Activated CD4-positive, alpha-beta memory T cell treated with anti-CD3 and anti-CD28 coated beads for 36 hours (primary cell): ENCODE measurements at regions of chr15 and their contacts with region 1.

Region 1: DNA sequence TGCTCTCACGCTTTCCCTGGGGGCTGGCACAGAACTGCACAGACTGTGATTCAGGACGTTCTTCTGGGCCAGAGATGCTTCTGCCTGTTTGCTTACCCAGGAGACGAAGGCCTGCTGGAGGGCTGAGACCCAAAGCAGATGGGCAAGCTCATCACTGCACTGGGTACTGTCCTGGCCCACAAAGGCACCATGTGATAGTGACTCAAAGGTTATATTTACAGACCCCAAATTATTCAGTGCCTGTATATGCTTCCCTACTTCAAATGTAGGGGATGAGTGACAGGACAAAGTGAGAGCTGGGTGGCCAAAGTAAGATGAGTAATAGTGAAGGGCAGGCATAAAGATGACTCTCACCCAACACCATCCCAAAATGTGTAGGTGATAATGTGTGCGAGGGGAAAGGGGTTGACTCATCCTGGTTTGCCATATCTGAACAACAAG is 127.4 kb downstream of the WDR76 start:
- DNase-seq: peak; percentile 38
- H3K4me3 Mint-ChIP-seq: no peak overlapping the region
- H3K27ac Mint-ChIP-seq: no peak overlapping the region
- H3K4me1 Mint-ChIP-seq: peaks cover 9% of the 10 kb centered on the region
- H3K27me3 Mint-ChIP-seq: peaks cover 10% of the 10 kb centered on the region

Region 2: DNA sequence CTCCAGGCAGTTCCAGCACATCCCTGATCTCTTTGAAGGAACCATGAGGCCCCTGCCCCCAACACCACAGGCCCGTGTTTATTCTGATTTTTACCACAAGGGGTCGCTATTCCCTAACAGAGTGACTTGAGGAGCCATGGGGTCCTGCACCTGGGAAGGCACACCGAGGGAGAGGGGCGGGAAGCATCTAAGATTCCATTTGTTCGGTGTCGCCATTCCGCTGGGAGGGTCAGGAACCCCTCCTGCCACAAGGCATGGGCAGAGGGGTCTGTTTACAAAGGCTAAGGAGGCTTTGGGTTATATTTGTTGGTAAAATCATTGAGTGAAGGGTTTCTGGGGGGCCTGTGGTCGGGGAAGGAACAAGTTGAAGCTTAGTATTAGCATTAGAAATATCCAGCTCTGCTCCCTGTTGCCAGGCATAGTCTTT is 50.3 kb before region 1 on chr15:
- CTCF ChIA-PET with region 1: no interaction called
- POLR2A ChIA-PET with region 1: no interaction called
- intact Hi-C with region 1: no loop called
- DNase-seq: peak; percentile 59
- H3K4me3 Mint-ChIP-seq: no peak overlapping the region
- H3K27ac Mint-ChIP-seq: no peak overlapping the region
- H3K4me1 Mint-ChIP-seq: peaks cover 2% of the 10 kb centered on the region
- H3K27me3 Mint-ChIP-seq: no peaks in the 10 kb centered on the region

Region 3: DNA sequence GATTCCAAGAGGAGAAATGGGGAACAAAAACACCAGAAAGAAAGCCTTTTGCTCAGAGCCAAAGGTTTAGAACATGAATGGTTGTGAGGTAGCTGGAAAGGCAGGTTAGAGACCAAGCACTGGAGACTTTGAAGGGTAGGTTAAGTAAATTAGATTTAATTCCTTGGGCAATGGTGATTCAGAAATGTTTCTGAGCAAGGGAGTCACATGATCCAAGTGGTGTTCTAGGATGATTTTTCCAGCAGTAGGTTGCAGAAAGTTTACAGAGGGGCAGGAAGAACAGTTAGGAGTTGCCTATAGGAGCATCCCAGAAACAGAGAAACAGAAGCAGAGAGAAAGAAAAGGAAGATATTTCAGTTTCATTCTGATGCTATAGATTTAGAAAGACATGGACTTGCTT is 12.4 kb after region 1 on chr15:
- CTCF ChIA-PET with region 1: no interaction called
- POLR2A ChIA-PET with region 1: no interaction called
- intact Hi-C with region 1: no loop called
- DNase-seq: no peak
- H3K4me3 Mint-ChIP-seq: no peak overlapping the region
- H3K27ac Mint-ChIP-seq: no peak overlapping the region
- H3K4me1 Mint-ChIP-seq: no peaks in the 10 kb centered on the region
- H3K27me3 Mint-ChIP-seq: no peaks in the 10 kb centered on the region

Region 4: GRCh38 chr15:43977072-43977884 is 23.1 kb after region 1 on chr15:
- CTCF ChIA-PET with region 1: no interaction called
- POLR2A ChIA-PET with region 1: no interaction called
- intact Hi-C with region 1: loop called (anchors 1 kb)
- DNase-seq: peak; percentile 83
- H3K4me3 Mint-ChIP-seq: no peak overlapping the region
- H3K27ac Mint-ChIP-seq: no peak overlapping the region
- H3K4me1 Mint-ChIP-seq: peaks cover 22% of the 10 kb centered on the region
- H3K27me3 Mint-ChIP-seq: peaks cover 11% of the 10 kb centered on the region